HEK293T (cell line): ENCODE measurements at regions of chr6 and their contacts with region 1.

Region 1: GRCh38 chr6:14066782-14067406 is 50.7 kb upstream of the CD83 start:
- DNase-seq: peak; percentile 59

Region 2: DNA sequence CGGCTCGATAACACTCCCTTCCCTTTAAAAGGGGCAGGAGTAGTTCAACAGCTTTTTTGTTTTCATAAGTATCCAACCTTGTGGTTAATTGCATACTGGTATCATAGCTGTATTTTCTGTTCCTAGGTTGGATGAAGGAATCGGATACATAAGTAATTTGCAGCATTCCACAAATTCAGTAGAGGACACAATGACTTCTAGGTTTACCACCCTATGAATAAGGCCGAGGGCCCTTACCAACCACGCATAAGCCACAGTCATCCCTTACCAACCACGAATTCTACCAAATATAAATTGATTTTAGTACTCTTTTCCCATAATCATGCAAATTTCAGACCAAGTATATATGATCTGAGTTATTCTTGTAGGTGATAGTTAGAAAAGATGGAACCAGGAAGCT is 288.9 kb before region 1 on chr6:
- CTCF ChIA-PET with region 1: no interaction called
- POLR2A ChIA-PET with region 1: no interaction called
- DNase-seq: no peak

Region 3: GRCh38 chr6:13903364-13903763 is 163.5 kb before region 1 on chr6:
- CTCF ChIA-PET with region 1: interaction called, 69 read pairs
- POLR2A ChIA-PET with region 1: no interaction called
- DNase-seq: no peak

Region 4: GRCh38 chr6:13908955-13909381 is 157.9 kb before region 1 on chr6:
- CTCF ChIA-PET with region 1: interaction called, 69 read pairs
- POLR2A ChIA-PET with region 1: no interaction called
- DNase-seq: peak; percentile 74

Region 5: GRCh38 chr6:14149053-14149738 is 82.3 kb after region 1 on chr6:
- CTCF ChIA-PET with region 1: no interaction called
- POLR2A ChIA-PET with region 1: no interaction called
- DNase-seq: no peak